GM13977 (cell line): ENCODE measurements at regions of chr9 and their contacts with region 1.

Region 1: DNA sequence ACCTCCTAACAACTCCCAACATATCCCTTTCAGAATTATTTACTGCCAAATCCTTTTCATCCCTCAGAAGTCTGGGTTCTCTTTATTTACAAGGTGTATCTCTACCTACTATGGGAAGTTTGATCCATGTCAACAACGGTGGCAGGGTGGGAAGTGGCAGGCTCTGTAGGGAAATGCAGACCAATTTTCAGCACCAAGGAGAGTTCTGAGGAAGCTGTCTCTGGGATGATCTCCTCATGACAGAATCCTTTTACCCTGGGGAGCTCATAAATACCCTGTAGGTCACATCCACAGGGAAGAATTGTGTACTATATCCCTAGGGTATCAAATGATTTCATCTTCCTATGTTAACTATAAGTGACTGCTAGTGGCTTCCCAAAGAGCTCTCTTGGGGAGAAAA is 107.8 kb upstream of the NEK6 start:
- DNase-seq: no peak
- CTCF ChIP-seq: no peak

Region 2: DNA sequence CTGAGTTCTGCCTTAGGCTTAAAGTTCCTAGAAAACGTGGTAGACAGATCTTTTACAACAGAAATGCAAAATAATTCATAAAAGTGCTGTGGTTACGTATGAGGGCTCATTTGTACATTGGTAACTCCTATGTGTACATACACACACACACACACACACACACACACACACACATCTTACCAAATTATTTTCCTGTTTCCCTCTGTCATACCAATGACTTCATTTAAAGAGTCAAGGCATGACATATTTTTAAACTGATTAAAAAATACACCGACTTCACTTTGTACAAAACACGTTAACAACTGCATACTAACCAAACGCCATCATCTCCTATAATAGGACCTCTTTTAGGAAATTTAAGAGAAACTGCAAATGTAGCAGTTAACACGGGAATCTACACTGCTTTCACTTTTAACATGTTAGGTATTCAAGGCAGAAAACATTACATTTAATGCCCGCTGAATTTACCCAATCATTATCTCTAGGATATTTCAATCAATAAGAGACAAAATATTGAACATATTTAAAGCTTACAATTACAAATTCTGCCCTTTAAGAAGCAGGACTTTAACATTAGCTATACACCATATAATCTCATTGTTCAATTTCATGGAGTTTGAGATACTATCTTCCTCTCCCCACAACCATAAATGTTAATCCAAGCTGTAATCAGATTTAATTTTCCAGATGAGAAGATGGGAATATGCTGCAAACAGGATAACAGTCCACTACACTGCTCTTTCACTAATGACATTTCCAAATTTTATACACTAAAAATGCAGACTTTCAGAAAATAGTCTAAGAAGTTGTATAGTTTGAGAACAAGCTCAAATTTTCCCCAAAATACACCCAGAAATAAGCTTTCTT is 353.1 kb before region 1 on chr9:
- in situ Hi-C with region 1: no loop called
- DNase-seq: no peak
- CTCF ChIP-seq: no peak

Region 3: DNA sequence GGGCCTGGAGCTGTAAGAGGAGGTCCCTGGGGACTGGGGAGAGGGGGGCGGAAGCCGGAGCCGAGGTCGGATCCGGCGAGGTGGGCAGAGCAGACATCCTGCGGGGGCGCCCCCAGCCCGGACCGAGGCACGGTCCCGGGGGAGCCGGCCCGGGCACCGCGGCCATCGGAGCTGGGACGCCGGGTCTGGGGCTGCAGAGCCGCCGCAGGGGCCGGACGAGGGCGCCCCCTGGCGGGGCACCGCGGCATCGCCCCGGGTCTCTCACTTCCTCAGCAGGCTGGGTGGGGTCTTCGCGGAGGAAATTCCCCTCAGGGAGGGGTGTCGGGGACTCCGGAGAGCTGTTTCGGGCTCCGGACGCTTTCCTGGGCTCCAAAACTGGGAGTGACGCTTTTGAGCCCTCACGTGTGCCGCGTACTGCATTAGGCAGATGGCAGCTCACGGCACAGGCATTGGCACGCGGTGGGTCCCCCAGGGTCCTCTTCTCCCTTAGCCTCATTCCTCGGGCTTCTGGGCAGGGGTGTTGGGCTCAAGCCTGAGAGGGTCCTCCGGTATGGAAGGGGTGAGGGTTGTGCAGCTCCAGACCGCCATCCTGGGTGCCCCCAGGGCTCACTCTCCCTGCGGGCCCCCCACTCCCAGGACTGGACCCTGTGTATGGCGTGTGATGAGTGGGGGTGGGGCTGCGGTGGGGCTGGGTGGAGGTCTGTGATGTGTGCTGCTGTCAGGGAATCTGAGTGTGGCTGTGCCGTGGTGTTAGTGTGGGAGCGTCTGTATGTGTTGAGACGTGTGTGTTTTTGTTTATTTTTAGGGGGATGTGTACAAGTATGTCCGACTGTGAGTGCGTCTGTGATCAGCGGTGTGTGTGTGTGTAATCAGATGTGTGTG is 108.8 kb before region 1 on chr9:
- in situ Hi-C with region 1: no loop called
- DNase-seq: peak; percentile 91
- CTCF ChIP-seq: peak; percentile 90

Region 4: GRCh38 chr9:124197177-124198095 is 47.4 kb after region 1 on chr9:
- in situ Hi-C with region 1: loop called (anchors 10 kb)
- DNase-seq: peak; percentile 53
- CTCF ChIP-seq: peak; percentile 6

Region 5: DNA sequence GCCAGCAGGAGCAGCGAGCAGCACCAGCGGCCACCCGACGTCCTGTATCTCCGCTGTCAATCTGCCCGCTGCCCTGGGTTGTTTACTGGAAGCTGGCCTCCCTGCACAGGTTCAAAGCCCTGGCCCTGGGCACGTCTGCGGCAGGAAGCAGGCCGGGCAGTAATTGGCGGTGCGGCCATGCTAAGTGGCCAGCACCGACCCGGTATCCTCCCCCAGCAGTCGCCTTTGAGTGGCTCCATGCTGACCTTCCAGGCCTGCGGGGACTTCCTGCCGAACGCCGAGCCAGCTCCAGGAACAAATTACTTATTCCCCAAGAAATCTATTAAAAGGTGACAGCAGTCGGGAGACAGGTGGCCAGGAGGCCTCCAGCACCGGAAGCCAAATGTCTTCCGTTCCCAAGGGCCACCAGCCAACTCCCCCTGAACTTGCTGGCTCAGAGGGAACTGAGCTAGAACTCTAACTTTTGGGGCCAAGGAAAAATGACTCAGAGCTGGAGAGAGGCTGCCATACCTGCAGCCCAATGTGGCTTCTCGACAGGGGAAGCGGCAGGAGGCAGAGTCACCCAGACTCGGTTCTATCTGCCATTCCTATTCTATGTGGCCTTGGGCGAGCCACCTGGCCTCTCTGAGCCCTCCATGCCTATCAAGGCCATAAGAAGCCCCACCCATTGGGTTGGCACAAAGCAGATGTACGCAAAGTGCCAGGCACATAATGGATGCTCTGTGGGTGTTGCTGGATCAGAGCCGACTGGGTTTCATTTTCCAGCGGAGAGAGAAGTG is 278.9 kb after region 1 on chr9:
- in situ Hi-C with region 1: no loop called
- DNase-seq: no peak
- CTCF ChIP-seq: no peak